GM10248 (cell line): ENCODE measurements at regions of chr1 and their contacts with region 1.

Region 1: GRCh38 chr1:31587720-31588394 is 11.5 kb downstream of the TINAGL1 start:
- DNase-seq: peak; percentile 82
- CTCF ChIP-seq: peak; percentile 73

Region 2: DNA sequence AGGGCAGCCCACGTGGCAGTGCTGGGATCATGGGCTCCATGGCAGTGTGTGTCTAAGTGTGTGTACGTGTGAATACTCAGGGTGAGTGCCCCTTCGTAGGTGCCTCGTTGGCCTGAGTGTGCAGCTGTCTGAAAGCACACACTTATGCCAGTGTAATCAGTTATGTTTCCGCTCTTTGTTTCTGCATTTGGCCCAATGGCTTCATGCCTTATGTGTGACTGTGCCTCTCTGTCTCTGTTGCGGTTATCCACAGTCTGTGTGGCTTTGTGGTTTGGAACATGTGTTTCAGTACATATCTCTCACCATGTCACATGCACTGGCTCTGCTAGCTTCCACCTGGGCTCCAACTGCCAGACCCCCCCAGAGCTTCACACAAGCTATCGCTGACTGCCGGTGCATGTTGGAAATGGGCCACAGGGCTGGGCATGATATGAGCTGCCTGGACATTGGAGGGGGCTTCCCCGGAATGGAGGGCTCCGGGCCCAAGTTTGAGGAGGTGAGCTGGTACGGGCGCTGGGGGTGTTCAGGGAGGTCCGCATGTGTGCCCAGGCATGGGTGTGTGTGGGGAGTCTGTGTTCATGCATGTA is 81.9 kb before region 1 on chr1:
- CTCF ChIA-PET with region 1: no interaction called
- POLR2A ChIA-PET with region 1: no interaction called
- DNase-seq: peak; percentile 56
- CTCF ChIP-seq: no peak

Region 3: DNA sequence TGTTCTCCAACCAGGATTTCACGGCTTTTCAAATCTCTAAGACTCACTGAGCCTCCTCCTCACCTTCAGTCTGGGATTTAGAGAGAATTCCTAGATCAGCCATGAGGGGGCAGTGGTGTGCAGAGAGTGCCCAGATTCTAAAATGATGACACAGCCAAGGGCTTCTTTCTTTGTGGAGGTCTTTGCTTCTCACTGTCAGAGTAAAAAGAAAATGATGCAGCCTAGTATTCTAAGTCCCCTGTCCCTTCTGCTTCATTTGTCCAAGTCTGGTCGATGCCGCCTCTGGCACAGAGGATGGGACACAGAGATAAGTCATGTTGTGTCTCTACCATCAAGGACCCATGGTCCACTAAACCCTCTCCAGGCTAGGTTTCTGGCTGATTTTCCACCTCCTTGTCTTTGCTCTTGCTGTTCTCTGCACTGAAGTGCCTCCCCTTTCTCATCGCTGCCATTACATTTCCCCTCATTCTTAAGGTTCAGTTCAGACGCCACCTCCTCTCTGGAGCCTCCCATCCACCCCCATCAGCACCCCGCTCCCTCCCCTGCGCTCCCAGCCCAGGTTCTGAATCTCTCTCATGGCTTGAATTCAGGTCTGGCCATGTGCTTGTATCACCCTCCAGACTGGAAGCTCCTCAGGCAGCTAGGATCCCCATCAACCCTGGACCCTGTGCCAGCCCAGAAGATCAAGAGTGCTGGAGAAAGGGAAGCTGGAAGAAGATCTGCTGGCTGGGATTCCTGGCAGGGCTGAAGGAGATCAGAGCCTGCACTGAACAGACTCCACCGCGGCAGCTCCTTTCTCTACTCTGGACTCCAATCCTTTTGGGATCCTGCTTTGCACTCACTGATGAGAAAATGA is 23.5 kb before region 1 on chr1:
- CTCF ChIA-PET with region 1: interaction called, 13 read pairs
- POLR2A ChIA-PET with region 1: no interaction called
- DNase-seq: peak; percentile 78
- CTCF ChIP-seq: peak; percentile 79

Region 4: DNA sequence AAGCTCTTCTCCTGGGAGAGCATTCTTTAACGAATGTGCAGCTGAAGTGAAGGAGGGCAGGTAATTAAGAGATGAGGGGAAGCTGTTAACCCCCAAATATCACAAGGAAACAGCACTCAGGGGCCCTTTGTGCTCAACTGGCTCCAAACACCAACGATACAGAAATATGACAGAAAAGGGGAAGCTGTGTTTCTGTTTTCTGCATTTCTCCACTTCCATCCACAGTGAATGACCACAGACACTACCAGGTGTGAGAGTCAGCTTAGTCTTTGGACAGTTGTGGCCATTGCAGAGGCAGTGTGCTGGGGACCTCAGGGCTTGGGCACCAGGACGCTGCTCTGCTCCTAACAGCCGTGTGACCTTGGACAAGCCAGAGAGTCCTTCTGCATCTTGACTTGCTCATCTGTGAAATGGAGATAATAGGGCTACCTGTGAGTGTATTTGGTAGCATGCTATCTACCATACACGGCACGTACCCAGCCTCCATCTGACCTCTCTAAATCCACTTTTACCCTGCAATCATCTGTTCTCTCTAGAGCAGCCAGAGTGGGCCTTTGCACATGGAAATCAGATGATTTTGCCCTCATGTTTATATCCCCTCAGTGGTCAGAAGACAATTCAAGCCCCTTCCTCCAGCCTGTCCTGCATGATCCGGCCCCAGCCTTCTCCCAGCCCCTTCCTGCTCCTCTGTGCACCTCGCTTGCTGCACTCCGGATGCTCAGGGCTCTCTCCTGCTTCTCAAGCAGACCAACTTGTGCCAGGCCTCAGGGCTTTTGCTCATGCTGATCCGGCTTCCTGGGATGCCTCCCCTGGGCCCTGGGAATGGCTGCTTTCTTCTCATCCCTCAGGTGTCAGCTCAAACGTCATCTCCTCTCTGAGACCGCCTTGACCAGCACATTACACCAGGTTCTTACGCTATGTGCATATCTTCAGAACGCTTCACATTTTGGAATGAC is 16.2 kb before region 1 on chr1:
- CTCF ChIA-PET with region 1: interaction called, 11 read pairs
- POLR2A ChIA-PET with region 1: no interaction called
- DNase-seq: no peak
- CTCF ChIP-seq: no peak